Gastrocnemius medialis (tissue), 4 donors: ENCODE measurements at regions of chr2 and their contacts with region 1.

Region 1: DNA sequence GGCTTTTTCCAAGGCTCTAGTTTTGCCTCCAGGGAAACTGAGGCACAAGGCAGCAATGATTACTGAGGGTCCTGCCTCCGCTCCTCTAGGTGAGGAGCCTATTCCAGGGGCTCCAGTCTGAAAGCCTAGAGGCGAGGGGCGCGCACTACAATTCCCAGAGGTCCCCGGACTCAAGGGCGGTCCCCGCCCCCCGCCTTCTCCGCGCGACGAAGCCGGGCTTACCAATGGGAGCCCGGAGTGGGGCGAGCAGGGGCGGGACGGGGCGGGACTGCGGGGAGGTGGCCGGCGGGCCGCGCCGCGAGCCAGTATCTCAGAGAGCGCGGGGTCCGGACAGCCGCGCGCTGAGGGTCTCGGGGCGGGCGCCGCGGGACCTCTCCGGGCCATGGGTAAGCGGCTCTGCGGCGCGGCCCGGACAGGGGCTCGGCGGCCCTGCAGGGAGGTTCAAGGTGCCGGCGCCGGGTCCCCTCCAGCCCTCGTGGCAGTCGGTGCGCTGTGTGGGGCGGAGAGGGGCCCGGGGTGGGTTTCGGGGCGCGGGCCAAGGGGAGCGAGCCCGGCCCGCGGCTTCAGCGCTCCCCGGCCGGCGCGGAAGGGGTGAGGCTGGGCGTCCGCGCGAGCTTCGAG is at the start of gene ARID5A:
- DNase-seq: peak; percentile 92 to 93
- ATAC-seq: peak; percentile 25 to 39
- H3K4me3 ChIP-seq: peak within 1 kb of the TSS; percentile 68 to 99 (median 83)
- H3K27ac ChIP-seq: peak within 1 kb of the TSS; percentile 94 to 99 (median 97)
- H3K4me1 ChIP-seq: peaks cover 74 to 82% of the 10 kb centered on the region in 2 donors
- H3K27me3 ChIP-seq: no peaks in the 10 kb centered on the region
- CTCF ChIP-seq: peak in 4 of 5 experiments; percentile 51 to 72 (median 66)
- POLR2A ChIP-seq: peak; percentile 99 to 100
- total RNA-seq, gene ARID5A: 6.7 to 126 (median 30.5) TPM

Region 2: DNA sequence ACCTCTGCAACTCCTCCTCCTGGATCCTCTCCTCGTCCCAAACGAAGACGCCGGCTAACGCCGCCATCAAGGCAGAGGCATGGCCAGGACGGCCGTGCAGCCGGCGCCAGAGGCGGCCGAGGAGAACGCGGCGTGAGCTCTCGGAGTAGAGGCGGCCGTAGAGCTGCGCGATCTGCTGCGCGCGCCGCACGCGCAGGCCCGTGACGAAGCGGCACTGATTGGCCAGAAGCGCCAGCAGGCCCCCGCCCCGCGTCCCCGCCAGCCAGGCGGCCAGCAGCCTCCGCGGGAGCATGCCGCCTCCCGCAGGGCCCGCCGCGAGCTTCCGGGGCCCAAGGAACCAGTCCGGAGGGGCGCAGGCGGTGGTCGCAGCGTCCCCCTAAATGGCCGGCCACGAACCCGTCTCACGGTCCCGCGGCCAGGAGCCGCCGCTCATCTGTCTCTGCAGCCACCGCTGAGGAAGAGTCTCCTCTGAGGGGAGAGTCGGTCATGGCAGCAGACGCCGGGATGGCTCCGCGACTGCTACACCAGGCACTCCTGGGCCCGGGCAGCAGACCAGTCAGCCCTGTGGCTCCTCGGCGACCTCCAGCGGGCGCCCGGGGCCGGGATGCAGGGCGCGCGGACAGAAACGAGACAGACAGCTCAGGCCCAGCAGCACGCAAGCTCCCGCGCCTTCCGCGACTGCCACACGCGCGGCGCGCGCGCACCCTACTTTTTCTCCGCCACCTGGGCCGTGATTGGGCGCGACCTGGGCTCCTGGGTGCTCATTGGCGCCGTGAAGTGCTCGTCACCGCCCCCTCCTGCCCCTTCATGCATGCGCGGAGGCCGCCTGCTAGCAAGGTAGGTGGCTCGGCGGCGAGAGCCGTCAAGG is 328.2 kb before region 1 on chr2 and contains the start of gene STARD7:
- in situ Hi-C with region 1: no loop called
- intact Hi-C with region 1: loop called (anchors 5 kb)
- DNase-seq: peak; percentile 98 to 99
- ATAC-seq: peak; percentile 59 to 65
- H3K4me3 ChIP-seq: peak within 1 kb of the TSS; percentile 68 to 94 (median 89)
- H3K27ac ChIP-seq: peak within 1 kb of the TSS; percentile 90 to 99 (median 98)
- H3K4me1 ChIP-seq: peaks cover 31 to 46% of the 10 kb centered on the region in 2 donors
- H3K27me3 ChIP-seq: no peaks in the 10 kb centered on the region
- CTCF ChIP-seq: peak in 4 of 5 experiments; percentile 21 to 46 (median 29)
- POLR2A ChIP-seq: peak; percentile 99 to 100
- total RNA-seq, gene STARD7: 237 to 512 (median 313) TPM

Region 3: DNA sequence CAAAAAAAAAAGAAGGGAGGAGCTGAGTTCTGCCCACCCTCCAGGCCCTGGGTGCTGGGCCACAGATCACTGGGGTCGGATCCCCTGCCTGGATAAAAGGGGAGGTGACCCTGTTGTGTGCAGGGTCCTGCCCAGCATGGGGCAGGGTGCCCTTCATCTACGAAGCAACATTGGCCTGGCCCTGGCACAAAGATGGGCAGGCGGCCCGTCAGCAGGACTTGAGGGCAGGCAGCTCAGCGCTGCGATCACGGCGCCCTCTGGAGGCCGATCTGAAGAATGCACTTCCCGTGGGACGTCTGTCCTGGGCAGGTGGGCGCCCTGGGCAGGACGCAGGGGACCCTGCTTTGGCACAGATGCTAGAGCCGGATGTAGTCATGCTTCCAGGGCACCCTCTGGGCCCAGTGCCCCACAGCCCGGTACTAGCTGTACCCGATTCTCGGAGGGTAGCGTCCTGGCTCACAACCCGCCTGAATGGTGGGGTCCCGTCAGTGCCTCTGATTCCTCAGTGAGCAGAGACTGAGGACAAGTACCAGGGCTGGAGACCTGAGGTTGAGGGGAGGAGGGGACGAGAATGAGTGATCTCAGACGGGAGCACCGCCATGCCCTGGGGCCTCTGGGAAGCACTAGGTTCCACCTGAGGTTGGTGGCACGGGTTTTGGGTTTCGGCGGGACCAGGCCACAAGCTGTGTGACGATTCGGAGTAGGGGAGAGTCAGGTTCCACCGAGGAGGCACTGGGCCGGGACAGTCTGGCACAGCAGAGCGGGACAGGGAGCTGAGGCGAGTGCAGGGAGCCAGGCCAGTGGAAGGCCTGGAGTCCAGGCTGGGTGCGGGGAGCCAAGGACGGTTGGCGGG is 18.0 kb after region 1 on chr2:
- in situ Hi-C with region 1: no loop called
- intact Hi-C with region 1: loop called (anchors 2 kb)
- DNase-seq: peak; percentile 56 to 84
- ATAC-seq: peak; percentile 70 to 72
- H3K4me3 ChIP-seq: peak overlapping the region; percentile 31 to 48 (median 40)
- H3K27ac ChIP-seq: peak overlapping the region; percentile 79 to 93 (median 84)
- H3K4me1 ChIP-seq: peaks cover 14 to 17% of the 10 kb centered on the region in 2 donors
- H3K27me3 ChIP-seq: no peaks in the 10 kb centered on the region
- CTCF ChIP-seq: peak; percentile 90 to 99 (median 97)
- POLR2A ChIP-seq: peak in 1 of 2 donors; percentile 52

Region 4: GRCh38 chr2:96638144-96639121 is 101.9 kb after region 1 on chr2 and contains the start of gene KANSL3:
- in situ Hi-C with region 1: loop called in 1 of 4 experiments (anchors 10 kb)
- intact Hi-C with region 1: loop called (anchors 5 kb)
- DNase-seq: peak; percentile 87 to 89
- ATAC-seq: peak; percentile 80 to 89
- H3K4me3 ChIP-seq: peak within 1 kb of the TSS; percentile 57 to 85 (median 66)
- H3K27ac ChIP-seq: peak within 1 kb of the TSS; percentile 83 to 98 (median 90)
- H3K4me1 ChIP-seq: peaks cover 36 to 37% of the 10 kb centered on the region in 2 donors
- H3K27me3 ChIP-seq: no peaks in the 10 kb centered on the region
- CTCF ChIP-seq: peak in 2 of 5 experiments; percentile 46 to 51
- POLR2A ChIP-seq: peak; percentile 95
- total RNA-seq, gene KANSL3: 49.4 to 76.9 (median 60.4) TPM

Region 5: DNA sequence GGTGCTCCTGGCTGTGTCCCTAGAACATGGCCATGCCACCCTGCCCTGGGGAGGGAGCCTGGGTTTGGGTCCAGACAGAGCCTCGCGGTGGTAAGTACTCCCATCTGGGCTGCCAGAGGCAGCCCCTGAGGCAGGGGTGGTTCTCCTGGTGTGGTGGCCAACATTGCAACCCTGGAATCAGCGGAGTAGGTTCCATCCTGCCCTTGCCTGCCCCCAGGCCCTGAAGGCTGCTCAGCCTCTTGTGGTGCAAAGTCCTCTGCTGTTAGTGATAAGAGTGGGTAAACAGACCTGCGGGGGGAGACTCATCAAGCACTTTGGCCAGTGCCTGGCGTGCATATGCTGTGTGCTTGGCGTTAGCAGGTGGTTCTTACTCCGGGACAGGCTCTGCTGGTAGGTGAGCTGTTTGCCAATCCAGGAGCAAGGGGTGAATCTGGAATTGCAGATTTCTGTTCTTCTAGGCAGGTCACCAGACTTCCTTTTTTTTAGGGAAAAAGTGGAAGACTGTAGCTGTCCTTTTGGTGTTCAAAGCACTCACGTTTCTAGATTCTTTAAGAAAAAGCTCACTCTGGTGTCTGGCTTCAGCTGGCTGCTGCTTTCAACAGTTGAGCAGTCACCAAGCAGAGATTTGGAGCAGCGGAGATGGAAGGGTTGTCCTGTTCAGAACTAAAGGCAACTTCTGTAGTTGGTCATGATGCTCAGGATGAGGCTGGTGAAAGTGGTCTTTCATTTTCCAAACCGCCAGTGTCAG is 282.7 kb after region 1 on chr2:
- in situ Hi-C with region 1: no loop called
- intact Hi-C with region 1: no loop called
- DNase-seq: no peak
- ATAC-seq: no peak
- H3K4me3 ChIP-seq: peak overlapping the region in 1 of 4 donors; percentile 8
- H3K27ac ChIP-seq: peak overlapping the region in 1 of 4 donors; percentile 28
- H3K4me1 ChIP-seq: peaks cover 48 to 71% of the 10 kb centered on the region in 2 donors
- H3K27me3 ChIP-seq: no peaks in the 10 kb centered on the region
- CTCF ChIP-seq: no peak
- POLR2A ChIP-seq: no peak

Region 6: DNA sequence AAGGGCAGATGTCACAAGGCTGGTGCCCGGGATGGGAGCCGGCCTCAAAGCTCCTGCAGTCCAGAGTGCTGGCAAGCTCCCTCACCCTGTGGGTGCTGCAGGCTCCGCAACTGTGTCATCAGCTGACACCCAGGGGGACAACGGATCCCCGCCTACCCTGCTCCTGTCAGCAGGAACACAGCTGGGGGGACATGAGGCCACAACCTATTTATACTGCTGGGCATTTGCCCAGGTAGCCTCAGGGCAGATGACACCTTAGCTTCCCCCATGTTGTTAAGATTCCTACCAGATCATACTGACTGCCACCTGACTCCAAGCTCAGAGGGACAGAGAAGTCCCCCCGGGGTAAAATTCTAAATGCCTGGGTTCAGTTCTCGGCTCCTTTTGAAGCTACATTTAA is 306.0 kb after region 1 on chr2:
- in situ Hi-C with region 1: no loop called
- intact Hi-C with region 1: loop called (anchors 2 kb)
- DNase-seq: peak; percentile 96 to 99
- ATAC-seq: peak; percentile 71 to 82
- H3K4me3 ChIP-seq: peak overlapping the region; percentile 52 to 65 (median 64)
- H3K27ac ChIP-seq: peak overlapping the region; percentile 94 to 99 (median 96)
- H3K4me1 ChIP-seq: peaks cover 21 to 44% of the 10 kb centered on the region in 2 donors
- H3K27me3 ChIP-seq: no peaks in the 10 kb centered on the region
- CTCF ChIP-seq: no peak
- POLR2A ChIP-seq: peak; percentile 83 to 94

Region 7: GRCh38 chr2:98157557-98157956 is 1621.0 kb after region 1 on chr2:
- in situ Hi-C with region 1: no loop called
- intact Hi-C with region 1: loop called (anchors 10 kb)
- DNase-seq: no peak
- ATAC-seq: no peak
- H3K4me3 ChIP-seq: no peak overlapping the region
- H3K27ac ChIP-seq: peak overlapping the region; percentile 93 to 99 (median 97)
- H3K4me1 ChIP-seq: peaks cover 54% of the 10 kb centered on the region in 2 donors
- H3K27me3 ChIP-seq: no peaks in the 10 kb centered on the region
- CTCF ChIP-seq: no peak
- POLR2A ChIP-seq: no peak